HCT116 (cell line): ENCODE measurements at regions of chr16 and their contacts with region 1.

Region 1: DNA sequence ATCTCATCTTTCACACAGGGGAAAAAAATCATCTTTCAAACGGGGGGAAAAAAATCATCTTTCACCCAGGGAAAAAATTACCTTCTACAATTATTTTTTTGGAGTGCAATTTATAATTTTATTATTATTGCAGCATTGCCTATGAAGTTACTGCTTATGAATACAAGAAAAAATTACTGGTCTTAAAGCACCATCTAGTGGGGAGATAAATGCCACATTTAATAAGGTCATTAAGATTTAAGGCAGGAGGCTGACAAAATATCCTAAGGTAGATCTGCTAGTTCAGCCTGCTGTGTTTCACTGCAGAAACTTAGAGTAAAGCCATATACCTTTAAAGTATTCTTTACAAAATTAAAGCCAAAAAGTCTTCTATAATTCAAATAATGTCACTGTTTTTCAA is 13.7 kb downstream of the SHCBP1 start:
- DNase-seq: peak; percentile 46
- ATAC-seq: peak; percentile 53; the same call in 1 of the 2 replicates
- H3K4me3 ChIP-seq: no peak overlapping the region
- H3K27ac ChIP-seq: no peak overlapping the region
- H3K4me1 ChIP-seq: no peaks in the 10 kb centered on the region
- H3K27me3 ChIP-seq: no peaks in the 10 kb centered on the region
- CTCF ChIP-seq: peak in 2 of 3 experiments; percentile 23 to 45; a peak in 2 of 6 replicates
- POLR2A ChIP-seq: no peak
- RAD21 ChIP-seq: peak; percentile 47; the same call in 1 of the 2 replicates

Region 2: DNA sequence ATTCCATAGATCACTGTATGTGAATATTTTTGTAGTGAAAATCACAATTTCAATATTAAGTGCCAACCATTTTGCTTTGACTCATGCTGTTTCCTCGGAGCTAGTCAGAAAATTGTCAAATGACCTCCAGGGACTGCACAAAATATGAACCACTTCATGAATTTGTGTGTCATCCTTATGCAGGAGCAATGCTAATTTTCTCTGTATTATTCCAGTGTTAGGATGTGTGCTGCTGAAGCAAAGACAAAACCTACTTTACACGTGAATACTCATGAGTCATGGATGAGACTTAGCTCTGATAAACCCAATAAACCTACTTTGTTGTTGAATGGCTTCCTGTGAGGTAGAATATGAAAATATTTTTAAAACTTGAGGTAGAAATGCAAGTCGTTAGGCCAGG is 51.6 kb before region 1 on chr16:
- CTCF ChIA-PET with region 1: interaction called, 11 read pairs
- POLR2A ChIA-PET with region 1: no interaction called
- RAD21 ChIA-PET with region 1: no interaction called
- intact Hi-C with region 1: loop called (anchors 1 kb)
- DNase-seq: no peak
- ATAC-seq: no peak
- H3K4me3 ChIP-seq: no peak overlapping the region
- H3K27ac ChIP-seq: no peak overlapping the region
- H3K4me1 ChIP-seq: no peaks in the 10 kb centered on the region
- H3K27me3 ChIP-seq: no peaks in the 10 kb centered on the region
- CTCF ChIP-seq: no peak
- POLR2A ChIP-seq: no peak
- RAD21 ChIP-seq: no peak

Region 3: GRCh38 chr16:46883690-46884512 is 276.4 kb after region 1 on chr16 and contains the start of gene GPT2:
- CTCF ChIA-PET with region 1: no interaction called
- POLR2A ChIA-PET with region 1: no interaction called
- RAD21 ChIA-PET with region 1: no interaction called
- intact Hi-C with region 1: no loop called
- DNase-seq: peak; percentile 91
- ATAC-seq: peak; percentile 99
- H3K4me3 ChIP-seq: peak within 1 kb of the TSS; percentile 82
- H3K27ac ChIP-seq: peak within 1 kb of the TSS; percentile 59; the same call in 1 of the 2 replicates
- H3K4me1 ChIP-seq: peaks cover 8 to 15% of the 10 kb centered on the region in 2 experiments
- H3K27me3 ChIP-seq: no peaks in the 10 kb centered on the region
- CTCF ChIP-seq: no peak
- POLR2A ChIP-seq: peak; percentile 60
- RAD21 ChIP-seq: no peak
- total RNA-seq, gene GPT2: 50.6 TPM